ENCODE measurements at regions of chr7 and their contacts with region 1.

Region 1: GRCh38 chr7:50092579-50093491 is at the start of gene ZPBP:
- DNase-seq: peak in 11 of 14 experiments; percentile 25 to 83 (median 44)
- ATAC-seq: peak; percentile 82
- H3K4me3 ChIP-seq: peak within 1 kb of the TSS; percentile 67
- H3K4me3 Mint-ChIP-seq: peak within 1 kb of the TSS; percentile 89
- H3K27ac ChIP-seq: peak within 1 kb of the TSS in 1 of 2 donors; percentile 65
- H3K27ac Mint-ChIP-seq: peak within 1 kb of the TSS; percentile 78
- H3K4me1 ChIP-seq: peaks cover 7% of the 10 kb centered on the region
- H3K4me1 Mint-ChIP-seq: peaks cover 8% of the 10 kb centered on the region
- H3K27me3 ChIP-seq: no peaks in the 10 kb centered on the region
- H3K27me3 Mint-ChIP-seq: no peaks in the 10 kb centered on the region
- CTCF ChIP-seq: peak; percentile 97
- total RNA-seq, gene ZPBP: not detected

Region 2: DNA sequence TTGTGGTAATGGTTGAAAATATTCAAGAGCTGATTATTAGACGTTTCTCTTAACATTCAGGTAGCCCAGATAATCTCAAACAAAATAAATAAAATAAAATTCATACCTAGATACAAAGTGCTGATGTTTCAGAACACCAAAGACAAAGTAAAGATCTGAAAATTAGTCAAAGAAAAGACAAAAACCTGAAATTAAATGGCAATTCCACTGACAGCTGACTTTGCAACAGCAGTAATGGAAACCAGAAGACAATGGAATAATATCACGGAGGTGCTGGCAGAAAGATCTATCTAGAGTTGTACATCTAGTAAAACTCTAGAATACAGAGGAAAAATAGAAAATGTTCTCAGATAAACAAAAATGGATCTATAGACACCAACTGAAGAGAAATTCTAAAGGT is 153.7 kb after region 1 on chr7:
- CTCF ChIA-PET with region 1: no interaction called
- POLR2A ChIA-PET with region 1: no interaction called
- intact Hi-C with region 1: no loop called
- DNase-seq: no peak
- ATAC-seq: no peak
- H3K4me3 ChIP-seq: no peak overlapping the region
- H3K4me3 Mint-ChIP-seq: no peak overlapping the region
- H3K27ac ChIP-seq: no peak overlapping the region
- H3K27ac Mint-ChIP-seq: no peak overlapping the region
- H3K4me1 ChIP-seq: no peaks in the 10 kb centered on the region
- H3K4me1 Mint-ChIP-seq: peaks cover 15% of the 10 kb centered on the region
- H3K27me3 ChIP-seq: no peaks in the 10 kb centered on the region
- H3K27me3 Mint-ChIP-seq: no peaks in the 10 kb centered on the region
- CTCF ChIP-seq: no peak

Region 3: DNA sequence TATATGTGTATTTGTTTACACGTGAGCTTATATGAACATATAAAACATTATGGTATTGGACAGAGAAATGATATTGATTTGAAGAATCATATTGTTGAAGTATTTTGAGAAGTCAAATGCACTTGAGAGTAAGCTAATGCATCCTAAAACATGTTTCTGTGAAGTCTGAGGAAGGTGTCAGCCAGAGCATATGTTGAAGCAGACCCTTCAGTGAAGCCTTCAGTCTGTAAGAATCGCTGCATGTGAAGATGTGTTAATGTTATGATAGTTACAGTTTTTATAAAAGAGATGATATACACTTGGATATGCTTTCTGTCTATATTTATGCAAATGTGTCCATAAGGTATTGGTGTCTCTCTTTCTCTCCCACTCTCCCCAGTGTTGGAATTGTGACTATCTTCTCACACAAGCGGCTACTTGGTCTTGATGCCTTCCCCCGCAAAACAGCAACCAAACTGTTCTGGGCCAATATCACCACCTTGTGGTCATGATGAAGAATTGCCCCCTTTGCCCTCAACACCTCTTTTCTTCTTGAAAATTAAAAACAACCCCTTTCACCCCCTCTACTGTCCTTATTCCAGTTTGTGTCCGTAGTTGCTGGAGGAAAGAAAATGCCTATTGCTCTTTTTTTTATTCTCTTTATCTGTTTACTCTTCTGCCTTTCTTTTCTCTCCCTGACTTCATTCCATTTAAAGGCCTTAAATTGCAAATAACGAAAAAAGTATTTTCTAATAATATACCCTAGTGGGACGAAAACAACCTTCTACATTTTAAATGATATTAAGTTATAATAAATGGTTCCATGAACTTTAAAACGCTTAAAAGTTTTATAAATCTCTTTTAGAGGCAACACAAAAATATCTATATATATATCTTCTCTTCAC is 276.6 kb after region 1 on chr7:
- CTCF ChIA-PET with region 1: interaction called, 6 read pairs
- POLR2A ChIA-PET with region 1: interaction called, 3 read pairs
- intact Hi-C with region 1: loop called in 1 of 2 experiments (anchors 5 kb)
- DNase-seq: peak in 7 of 14 experiments; percentile 45 to 91 (median 65)
- ATAC-seq: peak; percentile 58
- H3K4me3 ChIP-seq: no peak overlapping the region
- H3K4me3 Mint-ChIP-seq: peak overlapping the region; percentile 71
- H3K27ac ChIP-seq: peak overlapping the region; percentile 68 to 73
- H3K27ac Mint-ChIP-seq: no peak overlapping the region
- H3K4me1 ChIP-seq: peaks cover 80% of the 10 kb centered on the region
- H3K4me1 Mint-ChIP-seq: peaks cover 97% of the 10 kb centered on the region
- H3K27me3 ChIP-seq: no peaks in the 10 kb centered on the region
- H3K27me3 Mint-ChIP-seq: no peaks in the 10 kb centered on the region
- CTCF ChIP-seq: peak; percentile 88

Region 4: DNA sequence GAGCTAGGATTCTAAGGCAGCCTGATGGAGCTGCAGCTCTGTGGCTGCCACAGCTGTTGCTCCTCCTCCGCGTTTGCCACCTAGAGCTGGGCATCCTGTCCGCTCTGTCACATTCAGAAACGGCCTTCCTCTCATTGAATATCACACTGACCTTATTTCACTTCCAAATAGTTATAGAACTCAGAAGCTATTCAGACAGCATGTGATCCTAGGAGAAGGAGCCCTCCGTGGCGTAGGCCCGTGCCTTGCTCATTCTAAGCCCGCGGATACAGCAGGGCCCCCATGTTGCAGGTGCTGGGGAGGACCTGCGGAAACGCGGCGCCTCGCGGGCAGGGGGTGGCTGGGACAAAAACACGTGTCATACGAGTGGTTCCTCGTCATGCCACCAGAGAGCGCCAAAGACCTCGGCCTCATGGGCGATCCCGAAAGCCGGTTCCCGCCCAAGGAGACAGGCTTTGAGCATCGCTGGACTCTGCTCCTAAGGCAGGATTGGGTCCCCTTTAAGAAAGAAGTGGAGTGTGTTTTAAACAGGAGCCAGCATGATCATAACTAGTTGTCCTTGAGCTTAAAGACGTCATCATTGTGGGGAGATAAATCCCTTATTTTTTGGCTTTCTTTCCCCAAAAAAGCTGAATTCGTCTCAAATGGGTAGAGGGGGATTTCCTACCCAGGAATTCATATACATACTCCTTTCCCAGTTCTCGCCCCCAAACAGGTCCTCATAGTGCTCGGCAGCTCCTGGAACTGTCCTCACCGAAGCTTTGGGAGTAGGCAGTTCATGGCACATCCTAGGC is 375.2 kb after region 1 on chr7:
- CTCF ChIA-PET with region 1: interaction called, 7 read pairs
- POLR2A ChIA-PET with region 1: no interaction called
- intact Hi-C with region 1: loop called (anchors 2 to 5 kb)
- DNase-seq: peak; percentile 66 to 88 (median 74)
- ATAC-seq: peak; percentile 99
- H3K4me3 ChIP-seq: peak overlapping the region; percentile 29
- H3K4me3 Mint-ChIP-seq: peak overlapping the region; percentile 63
- H3K27ac ChIP-seq: no peak overlapping the region
- H3K27ac Mint-ChIP-seq: no peak overlapping the region
- H3K4me1 ChIP-seq: peaks cover 13% of the 10 kb centered on the region
- H3K4me1 Mint-ChIP-seq: peaks cover 12% of the 10 kb centered on the region
- H3K27me3 ChIP-seq: no peaks in the 10 kb centered on the region
- H3K27me3 Mint-ChIP-seq: no peaks in the 10 kb centered on the region
- CTCF ChIP-seq: peak; percentile 82

Region 5: GRCh38 chr7:50632561-50633413 is 540.0 kb after region 1 on chr7:
- CTCF ChIA-PET with region 1: no interaction called
- POLR2A ChIA-PET with region 1: no interaction called
- intact Hi-C with region 1: loop called (anchors 1 to 2 kb)
- DNase-seq: peak; percentile 31 to 78 (median 48)
- ATAC-seq: peak; percentile 76
- H3K4me3 ChIP-seq: no peak overlapping the region
- H3K4me3 Mint-ChIP-seq: no peak overlapping the region
- H3K27ac ChIP-seq: no peak overlapping the region
- H3K27ac Mint-ChIP-seq: no peak overlapping the region
- H3K4me1 ChIP-seq: peaks cover 6% of the 10 kb centered on the region
- H3K4me1 Mint-ChIP-seq: no peaks in the 10 kb centered on the region
- H3K27me3 ChIP-seq: peaks cover 0 to 4% of the 10 kb centered on the region in 2 experiments
- H3K27me3 Mint-ChIP-seq: peaks cover 7% of the 10 kb centered on the region
- CTCF ChIP-seq: peak; percentile 96

Region 6: DNA sequence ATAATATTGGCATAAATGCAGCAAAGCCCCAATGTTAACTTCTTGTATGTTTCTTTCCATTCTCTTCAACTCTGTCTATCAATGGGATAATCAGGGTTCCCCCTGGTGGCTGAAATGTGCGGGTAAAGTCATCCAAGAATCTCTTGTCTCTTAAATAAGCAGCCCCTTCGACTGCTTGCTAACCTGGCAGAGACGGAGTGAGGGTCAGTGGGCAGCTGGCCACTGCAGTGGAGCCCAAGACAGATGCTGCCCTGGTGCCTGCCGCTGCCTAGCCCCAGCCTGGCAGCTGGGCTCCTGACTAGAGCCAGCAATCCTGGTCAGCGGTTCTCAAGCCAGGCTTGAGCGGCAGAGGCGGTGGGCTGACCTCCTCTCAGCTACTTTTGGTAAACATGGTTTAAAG is 974.9 kb after region 1 on chr7:
- CTCF ChIA-PET with region 1: no interaction called
- POLR2A ChIA-PET with region 1: no interaction called
- intact Hi-C with region 1: loop called in 1 of 2 experiments (anchors 2 kb)
- DNase-seq: peak; percentile 7 to 66 (median 32)
- ATAC-seq: no peak
- H3K4me3 ChIP-seq: no peak overlapping the region
- H3K4me3 Mint-ChIP-seq: no peak overlapping the region
- H3K27ac ChIP-seq: no peak overlapping the region
- H3K27ac Mint-ChIP-seq: no peak overlapping the region
- H3K4me1 ChIP-seq: no peaks in the 10 kb centered on the region
- H3K4me1 Mint-ChIP-seq: no peaks in the 10 kb centered on the region
- H3K27me3 ChIP-seq: no peaks in the 10 kb centered on the region
- H3K27me3 Mint-ChIP-seq: no peaks in the 10 kb centered on the region
- CTCF ChIP-seq: peak; percentile 62

Region 7: DNA sequence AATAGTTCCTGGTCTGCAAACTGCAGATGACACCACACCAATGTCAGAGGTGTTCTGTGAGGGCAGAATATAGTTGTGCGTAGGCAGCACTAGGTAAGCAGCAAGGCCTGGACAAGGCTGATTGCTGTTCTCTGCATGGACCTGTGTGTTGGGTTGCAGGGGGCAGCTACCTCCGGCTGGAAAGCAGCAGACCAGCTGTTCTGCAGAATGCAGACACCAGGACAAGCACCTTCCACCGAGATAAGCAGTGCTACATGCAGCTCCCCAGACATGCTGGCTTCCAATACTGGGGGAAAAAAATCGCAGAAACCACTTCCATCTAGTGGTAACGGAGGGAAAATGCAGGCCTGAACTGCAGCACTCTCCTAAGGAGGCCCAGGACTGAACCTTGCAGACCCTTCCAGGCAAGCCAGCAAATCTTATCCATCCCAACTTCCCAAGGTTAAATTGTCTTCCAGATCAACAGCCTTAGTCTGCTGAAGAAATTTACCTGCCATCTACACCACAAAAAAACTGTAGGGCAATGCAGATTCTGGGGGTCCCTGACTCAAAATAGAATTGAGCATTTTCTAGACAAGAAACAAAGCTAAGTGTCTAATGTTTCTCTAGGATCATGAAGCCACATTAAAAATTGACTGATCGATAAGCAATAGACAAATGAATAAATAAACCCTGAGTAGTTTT is 1274.2 kb after region 1 on chr7:
- CTCF ChIA-PET with region 1: no interaction called
- POLR2A ChIA-PET with region 1: no interaction called
- intact Hi-C with region 1: loop called in 1 of 2 experiments (anchors 5 kb)
- DNase-seq: peak in 2 of 14 experiments; percentile 5 to 6
- ATAC-seq: no peak
- H3K4me3 ChIP-seq: no peak overlapping the region
- H3K4me3 Mint-ChIP-seq: no peak overlapping the region
- H3K27ac ChIP-seq: no peak overlapping the region
- H3K27ac Mint-ChIP-seq: no peak overlapping the region
- H3K4me1 ChIP-seq: no peaks in the 10 kb centered on the region
- H3K4me1 Mint-ChIP-seq: no peaks in the 10 kb centered on the region
- H3K27me3 ChIP-seq: no peaks in the 10 kb centered on the region
- H3K27me3 Mint-ChIP-seq: no peaks in the 10 kb centered on the region
- CTCF ChIP-seq: peak; percentile 26